Body of pancreas (tissue), 4 donors: ENCODE measurements at regions of chr20 and their contacts with region 1.

Region 1: DNA sequence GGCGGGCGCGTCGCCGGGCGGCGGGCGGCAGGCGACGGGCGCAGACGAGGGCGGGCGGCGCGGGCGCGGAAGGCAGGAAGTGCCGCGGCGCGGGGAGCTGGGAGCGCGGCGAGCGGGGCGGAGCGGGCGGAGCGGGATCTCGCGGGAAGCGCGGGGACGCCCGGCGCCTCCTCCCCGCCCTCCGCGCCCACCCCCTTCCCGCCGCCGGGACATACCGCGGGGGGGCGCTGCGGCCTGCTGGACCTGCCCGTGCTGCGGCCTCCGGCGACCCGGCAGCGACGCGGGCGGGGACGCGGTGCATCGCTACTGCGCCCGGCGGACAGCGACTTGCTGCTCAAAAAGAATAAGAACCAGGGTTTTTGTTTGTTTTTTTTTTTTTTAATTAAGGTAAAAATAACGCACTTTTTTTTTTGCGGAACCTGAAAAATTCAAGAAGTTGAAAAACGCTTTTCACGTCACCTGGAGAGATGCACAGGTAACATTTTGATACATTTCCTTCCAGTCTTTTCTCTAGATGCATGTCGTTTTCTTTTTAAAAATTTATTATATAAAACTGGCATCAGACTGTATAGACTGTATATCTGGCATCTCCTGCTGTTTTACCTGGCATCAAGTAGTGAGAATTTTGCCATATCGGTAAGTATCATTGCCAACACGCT is at the start of gene CENPB:
- DNase-seq: peak; percentile 89 to 93 (median 91)
- ATAC-seq: peak; percentile 94
- H3K4me3 ChIP-seq: peak within 1 kb of the TSS; percentile 35 to 38
- H3K27ac ChIP-seq: peak within 1 kb of the TSS; percentile 59 to 85 (median 68)
- H3K4me1 ChIP-seq: peaks cover 49% of the 10 kb centered on the region
- H3K27me3 ChIP-seq: no peaks in the 10 kb centered on the region
- CTCF ChIP-seq: peak; percentile 64 to 94 (median 90)
- POLR2A ChIP-seq: no peak
- total RNA-seq, gene CENPB: 57.9 to 61.0 TPM

Region 2: GRCh38 chr20:3282271-3283221 is 504.2 kb before region 1 on chr20:
- intact Hi-C with region 1: no loop called
- DNase-seq: peak in 2 of 4 donors; percentile 14 to 27
- ATAC-seq: peak; percentile 81
- H3K4me3 ChIP-seq: no peak overlapping the region
- H3K27ac ChIP-seq: peak overlapping the region in 2 of 4 donors; percentile 22 to 27
- H3K4me1 ChIP-seq: peaks cover 5% of the 10 kb centered on the region
- H3K27me3 ChIP-seq: no peaks in the 10 kb centered on the region
- CTCF ChIP-seq: no peak
- POLR2A ChIP-seq: no peak

Region 3: DNA sequence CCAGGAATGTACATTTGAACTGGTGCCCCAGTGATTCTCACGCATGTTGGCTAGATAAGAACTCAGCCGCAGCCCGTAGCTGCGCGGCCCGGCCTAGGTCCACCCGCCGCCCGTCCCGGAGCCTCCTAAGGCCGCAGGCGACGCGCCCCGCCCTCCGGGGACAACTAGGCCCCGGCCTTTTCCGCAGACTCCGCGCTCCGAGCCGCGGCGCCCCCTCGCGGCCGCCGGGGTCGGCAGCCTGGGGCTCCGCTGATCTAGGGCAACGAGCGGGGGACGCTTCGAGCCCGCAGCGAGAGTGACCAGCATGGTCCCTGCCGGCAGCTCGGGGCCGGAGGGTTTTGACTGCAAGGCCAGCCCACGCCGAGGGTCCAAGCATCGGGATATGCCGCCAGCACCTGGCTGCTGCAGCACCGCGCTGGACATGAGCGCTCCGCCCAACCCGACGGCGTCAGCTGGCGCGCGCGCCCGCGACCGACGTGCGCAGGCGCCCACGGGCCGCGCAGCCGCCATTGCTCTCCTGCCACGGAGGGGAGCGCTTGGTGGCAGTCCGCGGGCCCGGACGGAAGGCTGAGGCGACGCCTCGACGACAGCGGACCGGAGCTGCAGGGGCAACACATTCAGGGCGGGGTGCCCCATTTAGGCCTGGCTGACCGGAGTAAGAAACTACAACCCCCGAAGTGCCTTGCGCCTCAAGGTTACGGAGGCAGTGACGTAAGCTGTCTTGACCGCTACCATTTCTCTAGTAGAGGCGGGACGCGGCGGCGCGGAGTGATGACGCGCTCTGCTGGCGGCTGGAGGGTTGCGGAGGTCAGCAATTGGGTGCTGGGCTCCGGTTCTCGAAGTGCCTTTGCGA is 33.5 kb after region 1 on chr20 and contains the start of gene AP5S1:
- intact Hi-C with region 1: loop called (anchors 5 kb)
- DNase-seq: peak; percentile 97 to 99 (median 98)
- ATAC-seq: peak; percentile 83
- H3K4me3 ChIP-seq: peak within 1 kb of the TSS; percentile 42 to 50
- H3K27ac ChIP-seq: peak within 1 kb of the TSS; percentile 95 to 100 (median 100)
- H3K4me1 ChIP-seq: peaks cover 37% of the 10 kb centered on the region
- H3K27me3 ChIP-seq: no peaks in the 10 kb centered on the region
- CTCF ChIP-seq: peak; percentile 98 to 99 (median 99)
- POLR2A ChIP-seq: peak; percentile 64 to 77 (median 75)
- total RNA-seq, gene AP5S1: 4.9 to 5.3 TPM

Region 4: DNA sequence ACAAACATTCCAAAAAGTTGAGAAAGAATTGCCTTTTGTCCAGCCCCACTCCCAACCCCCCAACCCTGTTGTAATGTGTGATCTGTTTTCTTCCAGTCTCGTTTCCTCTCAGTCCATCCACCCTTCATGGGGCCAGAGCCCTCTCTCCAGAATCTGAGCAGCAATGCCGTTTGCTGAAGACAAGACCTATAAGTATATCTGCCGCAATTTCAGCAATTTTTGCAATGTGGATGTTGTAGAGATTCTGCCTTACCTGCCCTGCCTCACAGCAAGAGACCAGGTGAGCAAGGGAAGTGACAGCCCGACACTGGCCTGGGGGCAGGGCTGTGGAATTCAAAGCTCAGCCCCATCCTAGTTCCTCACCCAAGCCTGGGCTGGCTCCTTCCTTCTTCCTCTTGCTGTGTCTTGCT is 67.7 kb after region 1 on chr20:
- intact Hi-C with region 1: loop called (anchors 10 kb)
- DNase-seq: no peak
- ATAC-seq: no peak
- H3K4me3 ChIP-seq: no peak overlapping the region
- H3K27ac ChIP-seq: peak overlapping the region in 1 of 4 donors; percentile 21
- H3K4me1 ChIP-seq: peaks cover 2% of the 10 kb centered on the region
- H3K27me3 ChIP-seq: no peaks in the 10 kb centered on the region
- CTCF ChIP-seq: no peak
- POLR2A ChIP-seq: no peak

Region 5: DNA sequence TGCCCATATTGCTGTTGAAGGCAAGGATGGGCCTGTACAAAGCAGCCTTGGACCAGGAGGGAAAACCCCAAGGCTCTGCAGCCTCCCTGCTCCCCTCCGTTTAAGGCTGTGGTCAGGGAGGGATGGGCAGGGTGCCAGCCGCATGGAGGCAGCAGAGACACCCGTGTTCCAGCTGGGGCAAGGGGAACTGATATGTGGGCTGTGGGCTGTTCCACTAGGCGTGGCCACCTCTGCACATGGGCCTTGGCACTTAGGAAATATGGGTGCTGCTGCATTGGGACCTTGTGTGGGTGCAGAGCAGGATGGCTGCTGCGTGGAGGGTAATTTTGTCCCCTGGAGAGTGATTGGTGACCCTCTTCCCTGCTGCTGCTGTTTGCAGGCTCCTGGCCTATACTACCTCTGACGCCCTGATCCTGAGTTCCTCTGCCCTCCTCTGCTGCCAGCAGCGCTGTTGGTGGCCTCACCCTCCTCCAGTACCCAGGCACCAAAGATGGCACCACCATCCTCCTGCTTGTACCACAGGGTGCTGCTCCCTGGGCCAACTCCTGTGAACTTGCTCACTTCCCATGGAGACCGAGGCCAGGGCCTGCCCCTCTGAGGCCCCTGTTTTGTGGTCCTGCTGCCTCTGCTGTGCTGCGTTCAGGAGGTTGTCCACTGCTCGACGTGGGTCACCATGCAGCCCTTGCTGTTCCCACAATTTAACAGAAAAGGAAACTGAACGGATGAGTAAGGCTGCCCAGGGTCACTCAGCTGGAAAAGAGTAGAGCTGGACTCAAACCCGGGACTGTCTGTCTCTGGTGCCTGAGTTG is 137.7 kb after region 1 on chr20:
- intact Hi-C with region 1: no loop called
- DNase-seq: peak in 2 of 4 donors; percentile 31 to 43
- ATAC-seq: no peak
- H3K4me3 ChIP-seq: no peak overlapping the region
- H3K27ac ChIP-seq: no peak overlapping the region
- H3K4me1 ChIP-seq: peaks cover 8% of the 10 kb centered on the region
- H3K27me3 ChIP-seq: no peaks in the 10 kb centered on the region
- CTCF ChIP-seq: no peak
- POLR2A ChIP-seq: no peak